ENCODE measurements at regions of chr2 and their contacts with region 1.

Region 1: GRCh38 chr2:224650815-224651439 is 65.2 kb downstream of the CCDC195 start:
- DNase-seq: no peak
- H3K4me3 Mint-ChIP-seq: no peak overlapping the region
- H3K27ac Mint-ChIP-seq: no peak overlapping the region
- H3K4me1 Mint-ChIP-seq: no peaks in the 10 kb centered on the region
- H3K27me3 Mint-ChIP-seq: peaks cover 6% of the 10 kb centered on the region

Region 2: DNA sequence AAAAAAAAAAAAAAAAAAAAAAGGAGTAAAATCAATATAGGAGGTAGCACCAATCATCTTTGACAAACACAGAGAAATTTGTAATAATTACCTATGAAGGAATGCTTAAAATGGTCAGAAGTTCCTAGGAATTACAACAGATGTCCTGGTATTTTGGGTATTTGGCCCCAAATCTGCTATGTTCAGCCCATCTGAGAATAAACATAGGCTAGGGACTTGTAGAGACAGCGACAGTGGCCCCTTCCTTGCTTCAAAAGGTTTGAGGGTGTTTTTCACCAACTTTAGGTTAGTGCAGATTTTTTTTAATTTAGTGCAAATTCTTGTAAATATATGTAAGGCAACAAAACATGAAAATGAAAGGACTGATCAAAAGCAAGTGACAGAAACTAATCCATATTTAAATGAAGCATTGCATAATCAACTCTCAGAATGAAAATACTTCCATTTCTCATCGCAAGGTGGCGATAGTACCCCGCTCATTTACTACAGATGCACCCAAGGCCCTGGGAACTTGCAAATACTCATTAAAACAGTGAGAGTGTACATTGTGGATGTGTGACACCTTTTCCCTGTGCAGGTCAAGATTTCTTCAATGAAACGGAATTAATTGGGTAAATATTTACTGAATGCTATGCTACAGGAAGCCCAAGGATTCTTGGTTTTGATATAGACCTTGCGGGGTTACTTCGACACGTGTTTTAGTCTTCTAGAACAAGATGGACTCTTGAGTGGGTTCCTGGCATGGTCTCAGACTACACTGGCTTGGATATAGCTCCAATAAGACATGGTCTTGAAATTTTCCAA is 293.6 kb before region 1 on chr2:
- CTCF ChIA-PET with region 1: interaction called, 28 read pairs
- POLR2A ChIA-PET with region 1: no interaction called
- DNase-seq: peak; percentile 54
- H3K4me3 Mint-ChIP-seq: no peak overlapping the region
- H3K27ac Mint-ChIP-seq: no peak overlapping the region
- H3K4me1 Mint-ChIP-seq: no peaks in the 10 kb centered on the region
- H3K27me3 Mint-ChIP-seq: peaks cover 3% of the 10 kb centered on the region

Region 3: GRCh38 chr2:224449212-224450147 is 201.4 kb before region 1 on chr2:
- CTCF ChIA-PET with region 1: interaction called, 10 read pairs
- POLR2A ChIA-PET with region 1: no interaction called
- DNase-seq: no peak
- H3K4me3 Mint-ChIP-seq: no peak overlapping the region
- H3K27ac Mint-ChIP-seq: no peak overlapping the region
- H3K4me1 Mint-ChIP-seq: no peaks in the 10 kb centered on the region
- H3K27me3 Mint-ChIP-seq: peaks cover 14% of the 10 kb centered on the region